Astrocyte of the cerebellum (primary cell): ENCODE measurements at regions of chr18 and their contacts with region 1.

Region 1: DNA sequence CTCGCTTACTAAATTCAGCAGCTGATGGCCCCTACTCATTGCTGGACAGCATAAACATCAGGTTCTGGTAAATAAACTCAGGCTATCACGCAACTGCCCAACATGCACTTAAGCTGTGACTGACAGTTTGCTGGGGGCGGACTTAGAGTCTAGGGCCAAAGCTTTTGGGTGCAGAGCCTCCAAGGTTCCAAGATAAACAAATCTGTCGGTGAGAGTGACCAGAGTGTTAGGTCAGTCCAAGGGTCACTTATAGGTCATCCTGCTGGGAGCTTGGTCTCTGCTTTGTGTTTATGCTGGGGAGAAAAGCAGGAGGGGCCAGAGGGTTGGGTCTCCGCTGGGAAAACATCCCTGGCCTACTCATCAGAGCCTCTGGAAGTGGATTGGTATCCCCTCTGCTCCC is 188.6 kb upstream of the GATA6 start:
- DNase-seq: no peak
- H3K4me3 ChIP-seq: no peak overlapping the region
- CTCF ChIP-seq: no peak

Region 2: DNA sequence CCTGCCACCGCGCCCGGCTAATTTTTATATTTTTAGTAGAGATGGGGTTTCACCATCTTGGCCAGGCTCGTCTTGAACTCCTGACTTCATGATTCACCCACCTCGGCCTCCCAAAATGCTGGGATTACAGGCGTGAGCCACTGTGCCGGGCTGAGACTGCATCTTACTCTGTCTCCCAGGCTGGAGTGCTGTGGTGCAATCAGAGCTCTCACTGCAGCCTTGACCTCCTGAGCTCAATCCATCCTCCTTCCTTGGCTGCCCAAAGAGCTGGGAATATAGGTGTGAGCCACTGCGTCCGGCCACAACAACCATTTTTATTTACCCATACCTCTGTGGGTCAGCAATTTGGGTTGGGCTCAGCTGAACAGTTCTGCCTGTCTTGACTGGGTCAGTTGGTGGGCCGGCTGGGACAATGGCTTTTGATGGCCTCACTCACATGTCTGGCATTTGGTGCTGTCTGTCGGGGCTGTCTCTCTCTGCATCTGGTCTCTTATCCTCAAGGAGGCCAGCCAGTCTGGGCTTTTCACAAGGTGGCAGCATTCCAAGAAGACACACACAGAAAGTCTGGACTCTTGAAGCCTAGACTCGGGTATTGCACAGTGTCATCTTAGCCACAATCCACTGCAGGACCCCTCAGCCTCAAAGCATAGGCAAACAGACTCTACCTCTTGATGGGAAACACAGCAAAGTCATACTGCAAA is 71.8 kb after region 1 on chr18:
- in situ Hi-C with region 1: loop called (anchors 5 kb)
- DNase-seq: no peak
- H3K4me3 ChIP-seq: no peak overlapping the region
- CTCF ChIP-seq: no peak

Region 3: DNA sequence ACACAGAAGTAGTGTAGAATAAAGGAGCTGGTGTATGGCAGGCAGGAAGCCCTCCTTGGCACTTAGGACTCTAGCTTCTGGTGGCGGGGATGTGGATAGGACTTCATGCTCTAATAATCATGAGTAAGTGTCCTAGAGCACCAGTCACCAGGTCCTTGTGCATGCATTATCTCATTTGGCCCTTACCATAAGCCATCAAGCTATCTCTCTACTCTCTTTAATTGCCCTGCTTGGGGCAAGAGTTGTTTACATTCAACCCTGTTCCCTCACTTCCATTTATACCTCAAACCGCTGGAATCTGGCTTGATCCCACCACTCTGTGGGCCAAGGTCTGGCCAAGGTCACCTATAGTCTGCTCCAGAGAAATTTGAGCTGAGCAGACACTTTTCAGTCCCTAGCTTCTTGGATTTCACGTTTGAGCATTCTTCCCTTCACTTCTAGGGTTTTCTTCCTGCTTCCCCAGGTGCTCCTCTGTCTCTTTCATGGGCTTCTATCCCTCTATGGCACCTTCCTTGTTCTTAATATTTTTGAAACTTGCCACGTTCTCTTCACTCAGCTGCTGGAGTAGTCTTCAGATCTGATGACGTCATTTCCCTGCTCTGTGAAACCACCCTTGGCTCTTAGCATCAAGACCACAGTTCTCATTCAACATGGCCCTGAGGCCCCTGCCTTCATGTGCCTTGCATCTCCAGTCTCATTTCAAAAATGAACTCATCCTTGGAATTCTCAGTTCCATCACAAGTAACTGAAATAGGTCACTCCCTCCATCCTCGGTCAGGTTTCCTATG is 93.7 kb after region 1 on chr18:
- in situ Hi-C with region 1: no loop called
- DNase-seq: no peak
- H3K4me3 ChIP-seq: no peak overlapping the region
- CTCF ChIP-seq: no peak